HCT116 (cell line): ENCODE measurements at regions of chr12 and their contacts with region 1.

Region 1: DNA sequence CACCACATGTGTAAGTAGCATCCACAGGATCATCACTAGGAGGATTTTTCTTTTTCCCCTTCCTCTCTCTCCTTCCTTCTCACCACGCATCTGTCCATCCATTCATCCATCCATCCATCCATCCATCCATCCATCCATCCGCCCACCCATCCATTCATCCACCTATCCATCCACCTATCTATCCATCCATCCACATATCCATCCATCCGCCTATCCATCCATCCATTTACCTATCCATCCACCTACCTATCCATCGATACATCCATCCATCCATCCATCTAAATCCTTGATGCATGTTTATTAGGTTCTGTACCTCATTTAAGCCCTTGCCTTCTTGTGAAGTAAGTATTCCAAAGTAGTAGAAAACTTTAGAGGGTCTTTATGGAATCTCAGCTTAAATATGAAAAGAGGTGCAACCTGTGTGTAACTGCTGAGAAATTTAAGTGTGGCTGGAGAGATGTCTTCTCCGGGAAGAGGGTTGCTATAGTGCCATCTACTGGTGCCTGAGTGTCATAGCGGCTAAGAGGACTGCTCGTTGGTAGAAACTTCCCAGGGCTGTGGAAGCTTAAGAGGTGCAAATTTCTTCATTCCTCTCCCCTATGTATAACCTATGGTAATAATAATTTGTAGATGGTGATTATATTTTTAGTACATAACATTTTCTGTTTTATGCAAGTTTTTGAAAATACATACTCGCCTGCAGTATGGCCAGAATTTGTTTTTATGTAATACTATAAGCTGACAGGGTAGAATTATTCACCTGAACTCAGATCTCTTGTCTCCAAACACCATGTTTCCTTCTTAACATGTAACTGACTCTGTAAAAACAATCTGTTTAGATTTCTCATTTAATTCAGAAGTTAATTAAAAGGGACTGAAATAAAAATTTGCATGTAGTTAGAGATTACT is 46.0 kb downstream of the MYO1H start:
- DNase-seq: peak; percentile 48
- ATAC-seq: peak; percentile 89
- H3K4me3 ChIP-seq: no peak overlapping the region
- H3K27ac ChIP-seq: no peak overlapping the region
- H3K4me1 ChIP-seq: no peaks in the 10 kb centered on the region
- H3K27me3 ChIP-seq: no peaks in the 10 kb centered on the region
- CTCF ChIP-seq: peak; percentile 61 to 97 (median 95); a peak in 5 of 6 replicates
- POLR2A ChIP-seq: no peak
- RAD21 ChIP-seq: peak; percentile 66

Region 2: GRCh38 chr12:109264095-109264942 is 129.4 kb before region 1 on chr12:
- CTCF ChIA-PET with region 1: interaction called, 12 read pairs
- POLR2A ChIA-PET with region 1: no interaction called
- RAD21 ChIA-PET with region 1: no interaction called
- intact Hi-C with region 1: no loop called
- DNase-seq: peak; percentile 77
- ATAC-seq: peak; percentile 98
- H3K4me3 ChIP-seq: peak overlapping the region in 1 of 2 experiments; percentile 13; a peak in 1 of 4 replicates
- H3K27ac ChIP-seq: no peak overlapping the region
- H3K4me1 ChIP-seq: peaks cover 0 to 13% of the 10 kb centered on the region in 2 experiments; a peak in 2 of 4 replicates
- H3K27me3 ChIP-seq: no peaks in the 10 kb centered on the region
- CTCF ChIP-seq: peak; percentile 95 to 97 (median 95)
- POLR2A ChIP-seq: no peak
- RAD21 ChIP-seq: peak; percentile 88